Activated CD4-positive, alpha-beta T cell treated with anti-CD3 and anti-CD28 coated beads for 36 hours (primary cell): ENCODE measurements at regions of chr1 and their contacts with region 1.

Region 1: DNA sequence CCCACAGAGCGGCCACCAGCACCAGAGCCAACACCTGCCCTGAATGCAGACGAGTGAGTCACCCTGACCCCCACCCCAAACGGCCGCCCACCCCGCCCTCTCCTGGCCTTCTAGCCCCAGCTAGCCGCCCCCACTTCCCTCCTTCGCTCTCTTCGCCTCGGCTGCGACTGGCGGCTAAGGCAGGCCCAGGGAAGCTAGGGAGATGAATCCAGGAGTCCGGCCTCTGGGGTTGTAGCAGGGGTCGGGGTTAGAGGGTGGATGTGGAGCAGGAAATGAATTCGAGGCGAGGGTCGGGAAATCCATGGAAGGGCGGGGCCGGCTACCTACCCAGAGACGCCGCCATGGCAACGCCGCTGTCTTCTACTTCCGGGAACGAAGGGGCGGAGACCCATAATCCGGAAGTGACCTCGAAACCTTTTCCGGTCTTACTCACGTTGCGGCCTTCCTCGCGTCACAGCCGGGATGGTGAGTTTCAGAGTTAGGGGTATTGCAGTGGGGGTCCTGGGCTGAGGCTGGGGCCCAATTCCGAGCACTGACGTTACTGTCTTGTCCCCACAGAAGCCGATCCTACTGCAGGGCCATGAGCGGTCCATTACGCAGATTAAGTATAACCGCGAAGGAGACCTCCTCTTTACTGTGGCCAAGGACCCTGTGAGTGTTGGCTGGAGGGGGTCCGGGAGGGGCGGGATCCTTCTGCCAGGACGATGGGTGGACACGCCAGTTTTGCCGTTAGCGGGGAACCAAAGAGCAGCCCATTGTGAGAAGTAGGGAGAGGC is at the starts of genes EIF3I and TMEM234:
- DNase-seq: peak; percentile 95
- ATAC-seq: peak; percentile 95
- H3K4me3 Mint-ChIP-seq: peak within 1 kb of the TSS; percentile 96
- H3K27ac Mint-ChIP-seq: peak within 1 kb of the TSS; percentile 97
- H3K4me1 Mint-ChIP-seq: peaks cover 29% of the 10 kb centered on the region
- H3K27me3 Mint-ChIP-seq: no peaks in the 10 kb centered on the region
- total RNA-seq, gene EIF3I: 299 to 349 TPM
- total RNA-seq, gene TMEM234: 7.3 to 8.2 TPM

Region 2: GRCh38 chr1:31762726-31763670 is 459.2 kb before region 1 on chr1:
- CTCF ChIA-PET with region 1: no interaction called
- POLR2A ChIA-PET with region 1: no interaction called
- intact Hi-C with region 1: no loop called
- DNase-seq: peak; percentile 87
- ATAC-seq: peak; percentile 65
- H3K4me3 Mint-ChIP-seq: peak overlapping the region; percentile 65
- H3K27ac Mint-ChIP-seq: no peak overlapping the region
- H3K4me1 Mint-ChIP-seq: peaks cover 26% of the 10 kb centered on the region
- H3K27me3 Mint-ChIP-seq: peaks cover 15% of the 10 kb centered on the region

Region 3: GRCh38 chr1:32052887-32053286 is 169.3 kb before region 1 on chr1:
- CTCF ChIA-PET with region 1: no interaction called
- POLR2A ChIA-PET with region 1: no interaction called
- intact Hi-C with region 1: no loop called
- DNase-seq: no peak
- ATAC-seq: no peak
- H3K4me3 Mint-ChIP-seq: no peak overlapping the region
- H3K27ac Mint-ChIP-seq: no peak overlapping the region
- H3K4me1 Mint-ChIP-seq: peaks cover 4% of the 10 kb centered on the region
- H3K27me3 Mint-ChIP-seq: no peaks in the 10 kb centered on the region

Region 4: DNA sequence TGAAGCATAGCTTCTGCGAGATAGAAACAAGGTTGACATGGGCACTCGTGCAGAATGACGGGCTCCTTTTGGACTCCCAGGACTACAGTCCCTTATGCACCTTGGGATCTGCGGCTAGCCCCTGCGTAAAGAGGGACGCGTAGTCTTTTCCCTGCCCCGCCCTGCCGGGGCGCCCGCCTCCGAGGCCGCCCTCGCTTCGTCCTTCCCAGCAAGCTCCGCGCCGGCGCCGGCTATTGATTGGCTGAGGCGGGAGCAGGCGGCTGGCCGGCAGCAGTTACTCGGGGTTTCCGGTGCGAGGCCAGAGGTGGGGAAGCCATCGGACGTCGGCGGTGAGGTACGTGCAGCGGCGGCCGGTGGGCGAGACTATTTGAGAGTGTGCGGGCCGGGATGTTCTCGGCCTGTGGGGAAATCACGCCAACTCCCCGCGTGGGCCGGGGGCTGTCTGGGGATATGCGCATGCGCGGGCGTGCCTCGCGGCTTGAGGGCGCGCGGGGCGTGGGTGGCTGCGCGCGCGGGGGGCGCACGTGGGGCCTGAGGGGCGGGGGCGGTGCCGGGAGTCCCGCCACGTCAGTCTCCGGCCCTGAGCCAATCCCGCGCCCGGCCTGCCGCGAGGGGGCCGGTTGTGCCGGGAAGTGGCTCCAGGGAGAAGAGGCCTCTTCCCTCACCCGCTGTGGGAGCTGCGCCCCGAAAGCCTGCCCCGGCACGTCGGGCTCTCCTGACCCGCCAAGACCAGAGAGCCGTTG is 42.6 kb before region 1 on chr1 and contains the start of gene TXLNA:
- CTCF ChIA-PET with region 1: interaction called, 3 read pairs
- POLR2A ChIA-PET with region 1: no interaction called
- intact Hi-C with region 1: loop called in 1 of 2 experiments (anchors 1 kb)
- DNase-seq: peak; percentile 96
- ATAC-seq: peak; percentile 93
- H3K4me3 Mint-ChIP-seq: peak within 1 kb of the TSS; percentile 86
- H3K27ac Mint-ChIP-seq: peak within 1 kb of the TSS; percentile 98
- H3K4me1 Mint-ChIP-seq: peaks cover 44% of the 10 kb centered on the region
- H3K27me3 Mint-ChIP-seq: no peaks in the 10 kb centered on the region
- total RNA-seq, gene TXLNA: 79.5 to 79.7 TPM

Region 5: GRCh38 chr1:32200226-32201010 is 21.8 kb before region 1 on chr1 and contains the start of gene CCDC28B:
- CTCF ChIA-PET with region 1: interaction called, 16 read pairs
- POLR2A ChIA-PET with region 1: no interaction called
- intact Hi-C with region 1: loop called (anchors 1 to 2 kb)
- DNase-seq: peak; percentile 77
- ATAC-seq: peak; percentile 53
- H3K4me3 Mint-ChIP-seq: peak within 1 kb of the TSS; percentile 71
- H3K27ac Mint-ChIP-seq: peak within 1 kb of the TSS; percentile 86
- H3K4me1 Mint-ChIP-seq: peaks cover 57% of the 10 kb centered on the region
- H3K27me3 Mint-ChIP-seq: no peaks in the 10 kb centered on the region
- total RNA-seq, gene CCDC28B: 13.0 to 19.3 TPM

Region 6: DNA sequence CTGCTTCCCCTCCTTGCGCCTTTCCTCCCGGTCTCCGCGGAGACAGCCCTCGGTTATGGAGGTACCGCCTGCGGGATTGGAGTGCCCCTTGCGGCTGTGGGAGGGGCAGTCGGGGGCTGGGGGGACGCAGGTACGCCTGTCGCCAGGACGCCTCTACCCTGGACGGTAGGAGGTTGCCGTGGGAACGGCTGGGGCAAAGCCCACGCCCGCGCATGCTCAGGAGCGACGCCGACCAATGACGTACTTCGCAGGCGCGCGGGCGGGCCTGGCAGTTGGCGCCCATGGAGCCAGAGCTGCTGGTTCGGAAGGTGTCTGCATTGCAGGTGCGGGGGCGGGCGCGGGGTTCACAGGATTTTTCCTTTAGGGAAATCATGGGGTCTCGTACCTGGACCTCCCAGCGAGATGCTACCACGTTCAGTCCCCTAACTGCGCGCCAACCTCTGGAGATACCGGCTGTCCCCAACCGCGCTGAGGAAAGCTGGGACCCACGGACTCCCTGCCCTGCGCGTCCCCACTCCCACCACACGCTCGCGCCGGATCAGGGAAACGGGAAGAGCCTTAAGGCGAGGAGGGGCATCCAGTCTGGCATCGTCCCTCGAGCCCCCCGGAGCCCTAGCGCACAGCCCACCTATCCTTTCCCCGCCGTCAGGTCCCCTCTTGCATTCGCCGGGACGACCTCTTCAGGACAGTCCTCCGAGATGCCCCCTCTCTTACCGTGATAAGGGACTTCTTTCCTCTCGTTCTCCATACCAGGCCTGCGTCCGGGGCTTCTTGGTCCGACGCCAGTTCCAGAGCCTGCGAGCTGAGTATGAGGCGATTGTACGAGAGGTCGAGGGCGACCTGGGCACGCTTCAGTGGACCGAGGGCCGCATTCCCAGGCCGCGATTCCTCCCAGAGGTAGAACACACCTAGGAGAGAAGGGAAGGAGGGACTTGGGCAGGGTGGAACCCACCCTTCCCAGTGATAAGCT is 16.5 kb before region 1 on chr1 and contains the start of gene IQCC:
- CTCF ChIA-PET with region 1: interaction called, 16 read pairs
- POLR2A ChIA-PET with region 1: no interaction called
- intact Hi-C with region 1: loop called (anchors 1 to 2 kb)
- DNase-seq: peak; percentile 94
- ATAC-seq: peak; percentile 75
- H3K4me3 Mint-ChIP-seq: peak within 1 kb of the TSS; percentile 90
- H3K27ac Mint-ChIP-seq: peak within 1 kb of the TSS; percentile 87
- H3K4me1 Mint-ChIP-seq: peaks cover 28% of the 10 kb centered on the region
- H3K27me3 Mint-ChIP-seq: no peaks in the 10 kb centered on the region
- total RNA-seq, gene IQCC: 4.4 to 5.0 TPM

Region 7: DNA sequence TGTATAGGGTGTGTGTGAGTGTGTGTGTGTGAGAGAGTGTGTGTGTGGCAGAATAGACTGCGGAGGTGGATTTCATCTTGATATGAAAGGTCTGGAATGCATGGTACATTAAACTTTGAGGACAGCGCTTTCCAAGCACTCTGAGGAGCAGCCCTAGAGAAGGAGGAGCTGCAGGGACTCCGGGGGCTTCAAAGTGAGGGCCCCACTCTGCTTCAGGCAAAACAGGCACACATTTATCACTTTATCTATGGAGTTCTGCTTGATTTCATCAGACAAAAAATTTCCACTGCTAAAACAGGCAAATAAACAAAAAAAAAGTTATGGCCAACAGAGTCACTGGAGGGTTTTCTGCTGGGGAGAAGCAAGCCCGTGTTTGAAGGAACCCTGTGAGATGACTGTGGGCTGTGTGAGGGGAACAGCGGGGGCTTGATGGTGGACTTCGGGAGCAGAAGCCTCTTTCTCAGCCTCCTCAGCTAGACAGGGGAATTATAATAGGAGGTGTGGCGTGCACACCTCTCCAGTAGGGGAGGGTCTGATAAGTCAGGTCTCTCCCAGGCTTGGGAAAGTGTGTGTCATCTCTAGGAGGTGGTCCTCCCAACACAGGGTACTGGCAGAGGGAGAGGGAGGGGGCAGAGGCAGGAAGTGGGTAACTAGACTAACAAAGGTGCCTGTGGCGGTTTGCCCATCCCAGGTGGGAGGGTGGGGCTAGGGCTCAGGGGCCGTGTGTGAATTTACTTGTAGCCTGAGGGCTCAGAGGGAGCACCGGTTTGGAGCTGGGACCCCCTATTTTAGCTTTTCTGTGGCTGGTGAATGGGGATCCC is 51.4 kb after region 1 on chr1:
- CTCF ChIA-PET with region 1: no interaction called
- POLR2A ChIA-PET with region 1: no interaction called
- intact Hi-C with region 1: loop called (anchors 1 to 5 kb)
- DNase-seq: peak; percentile 91
- ATAC-seq: peak; percentile 93
- H3K4me3 Mint-ChIP-seq: peak overlapping the region; percentile 62
- H3K27ac Mint-ChIP-seq: peak overlapping the region; percentile 94
- H3K4me1 Mint-ChIP-seq: peaks cover 58% of the 10 kb centered on the region
- H3K27me3 Mint-ChIP-seq: no peaks in the 10 kb centered on the region

Region 8: DNA sequence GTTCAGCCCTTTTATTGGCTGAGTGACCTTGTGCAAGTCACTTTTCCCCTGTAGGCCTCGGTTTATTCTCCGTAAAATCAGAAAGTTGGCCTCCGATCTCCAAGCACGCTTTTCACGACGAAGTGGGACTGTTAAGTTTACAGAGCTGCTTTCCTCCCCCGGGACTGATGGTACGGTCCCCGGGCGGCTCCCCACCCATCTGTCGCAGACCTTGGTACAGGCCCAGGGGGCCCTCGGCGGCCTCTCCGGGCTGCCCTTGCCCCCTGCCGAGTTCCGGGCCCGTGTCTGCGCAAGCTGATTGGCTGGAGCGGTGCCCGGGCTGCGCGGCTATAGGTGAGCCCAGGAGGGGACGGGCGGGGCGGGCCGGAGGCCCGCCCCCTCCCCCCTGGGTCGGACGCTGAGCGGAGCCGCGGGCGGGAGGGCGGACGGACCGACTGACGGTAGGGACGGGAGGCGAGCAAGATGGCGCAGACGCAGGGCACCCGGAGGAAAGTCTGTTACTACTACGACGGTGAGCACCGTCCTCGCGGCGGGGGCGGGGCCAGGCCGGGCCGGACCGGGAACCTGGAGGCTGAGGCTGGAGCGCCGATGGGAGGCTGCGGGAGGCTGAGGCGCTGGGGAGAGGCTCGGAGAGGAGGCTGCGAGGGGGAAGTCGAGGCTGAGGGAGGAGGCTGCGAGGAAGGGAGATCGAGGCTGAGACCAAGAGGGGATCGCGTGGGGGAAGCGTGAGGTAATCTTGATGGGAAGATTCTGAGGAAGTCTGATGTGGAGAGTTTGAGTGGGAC is 69.7 kb after region 1 on chr1 and contains the start of gene HDAC1:
- CTCF ChIA-PET with region 1: interaction called, 3 read pairs
- POLR2A ChIA-PET with region 1: no interaction called
- intact Hi-C with region 1: loop called (anchors 1 kb)
- DNase-seq: peak; percentile 99
- ATAC-seq: peak; percentile 98
- H3K4me3 Mint-ChIP-seq: peak within 1 kb of the TSS; percentile 100
- H3K27ac Mint-ChIP-seq: peak within 1 kb of the TSS; percentile 99
- H3K4me1 Mint-ChIP-seq: peaks cover 43% of the 10 kb centered on the region
- H3K27me3 Mint-ChIP-seq: no peaks in the 10 kb centered on the region
- total RNA-seq, gene HDAC1: 132 to 146 TPM

Region 9: DNA sequence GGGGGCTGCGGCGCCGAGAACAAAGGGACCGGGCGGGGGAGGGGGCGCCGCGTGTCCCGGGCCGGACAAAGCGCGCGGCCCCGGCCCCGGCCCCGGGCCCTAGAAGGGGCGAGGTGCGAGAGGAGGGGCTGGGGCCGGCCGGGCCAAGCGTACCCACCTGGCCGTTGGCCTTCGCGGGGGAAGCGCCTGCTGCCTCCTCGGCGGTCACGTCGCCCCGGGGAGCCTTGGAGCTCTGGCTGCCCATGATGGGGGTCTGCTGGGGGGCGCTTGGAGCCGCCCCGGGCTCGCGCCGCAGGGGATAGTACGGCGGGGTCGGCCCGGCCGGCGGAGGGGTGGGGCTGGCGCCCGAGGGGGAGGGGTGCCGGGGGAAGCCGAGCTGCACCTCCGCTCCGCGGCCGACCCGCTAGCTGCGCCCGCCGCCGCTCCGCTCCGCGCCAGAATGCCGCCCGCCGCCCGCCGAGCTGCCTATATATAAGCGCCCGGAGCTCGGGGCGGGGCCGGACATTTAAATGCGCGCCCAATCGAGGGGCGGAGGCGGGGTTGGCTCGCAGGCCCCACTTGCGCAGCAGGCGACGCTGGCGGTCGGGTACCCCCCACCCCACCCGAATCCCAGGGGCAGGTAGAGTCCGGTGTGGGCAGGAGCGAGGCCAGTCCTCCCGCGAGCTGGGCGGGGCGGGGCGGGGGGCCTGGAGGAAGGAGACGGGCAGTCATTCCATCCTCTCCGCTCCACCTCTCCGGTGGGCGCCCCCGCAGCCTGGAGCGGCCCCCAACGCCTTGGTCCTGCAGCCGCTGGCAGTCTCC is 113.8 kb after region 1 on chr1 and contains the start of gene MARCKSL1:
- CTCF ChIA-PET with region 1: interaction called, 4 read pairs
- POLR2A ChIA-PET with region 1: interaction called, 4 read pairs
- intact Hi-C with region 1: loop called in 1 of 2 experiments (anchors 5 kb)
- DNase-seq: peak; percentile 88
- ATAC-seq: peak; percentile 50
- H3K4me3 Mint-ChIP-seq: peak within 1 kb of the TSS; percentile 77
- H3K27ac Mint-ChIP-seq: peak within 1 kb of the TSS; percentile 76
- H3K4me1 Mint-ChIP-seq: peaks cover 52% of the 10 kb centered on the region
- H3K27me3 Mint-ChIP-seq: no peaks in the 10 kb centered on the region
- total RNA-seq, gene MARCKSL1: 27.0 to 29.3 TPM

Region 10: GRCh38 chr1:32413507-32414185 is 191.5 kb after region 1 on chr1:
- CTCF ChIA-PET with region 1: no interaction called
- POLR2A ChIA-PET with region 1: no interaction called
- intact Hi-C with region 1: no loop called
- DNase-seq: peak; percentile 83
- ATAC-seq: peak; percentile 88
- H3K4me3 Mint-ChIP-seq: no peak overlapping the region
- H3K27ac Mint-ChIP-seq: peak overlapping the region; percentile 62
- H3K4me1 Mint-ChIP-seq: peaks cover 2% of the 10 kb centered on the region
- H3K27me3 Mint-ChIP-seq: peaks cover 3% of the 10 kb centered on the region